Cardiac septum (tissue), 1 donor: ENCODE measurements at regions of chr15 and their contacts with region 1.

Region 1: DNA sequence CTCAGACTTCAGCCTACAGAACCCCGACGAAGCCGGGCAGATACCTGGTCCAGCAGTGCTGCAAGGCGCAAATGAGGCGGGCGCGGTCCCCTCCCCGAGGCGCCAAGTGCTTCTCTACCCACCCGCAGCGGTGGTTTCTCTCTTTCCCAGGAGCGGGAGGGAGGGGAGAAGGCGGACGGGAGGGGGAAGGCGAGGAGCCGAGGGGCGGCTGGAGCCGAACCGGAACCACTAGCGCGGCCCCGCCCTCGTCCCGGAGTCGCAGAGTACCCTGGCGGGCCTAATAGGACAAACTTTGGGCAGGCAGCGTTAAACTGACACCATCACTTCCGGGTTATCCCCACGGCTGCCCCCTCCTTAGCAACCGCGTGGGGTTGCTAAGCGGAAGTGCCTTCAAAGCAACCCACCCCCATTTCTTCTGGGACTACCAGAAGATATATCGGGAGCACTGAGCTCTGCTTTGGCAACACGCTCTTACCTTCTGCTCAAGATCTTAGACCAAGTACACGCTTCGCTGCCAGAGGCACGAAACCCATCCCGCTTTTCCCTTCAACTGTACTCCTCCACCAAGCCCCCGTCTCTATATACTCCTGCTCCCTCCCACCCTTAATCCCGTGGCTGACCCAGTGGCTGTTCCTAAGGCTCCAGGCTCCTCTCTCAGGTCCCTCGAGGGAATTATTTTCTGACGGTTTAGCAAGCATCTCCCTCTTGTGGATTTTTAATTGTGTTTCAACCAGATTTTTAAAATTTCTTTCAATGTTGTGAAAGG is at the start of gene CSNK1G1:
- DNase-seq: peak; percentile 96
- total RNA-seq, gene CSNK1G1: 8.3 TPM

Region 2: GRCh38 chr15:64209680-64210334 is 146.3 kb before region 1 on chr15:
- intact Hi-C with region 1: loop called (anchors 5 kb)
- DNase-seq: no peak

Region 3: DNA sequence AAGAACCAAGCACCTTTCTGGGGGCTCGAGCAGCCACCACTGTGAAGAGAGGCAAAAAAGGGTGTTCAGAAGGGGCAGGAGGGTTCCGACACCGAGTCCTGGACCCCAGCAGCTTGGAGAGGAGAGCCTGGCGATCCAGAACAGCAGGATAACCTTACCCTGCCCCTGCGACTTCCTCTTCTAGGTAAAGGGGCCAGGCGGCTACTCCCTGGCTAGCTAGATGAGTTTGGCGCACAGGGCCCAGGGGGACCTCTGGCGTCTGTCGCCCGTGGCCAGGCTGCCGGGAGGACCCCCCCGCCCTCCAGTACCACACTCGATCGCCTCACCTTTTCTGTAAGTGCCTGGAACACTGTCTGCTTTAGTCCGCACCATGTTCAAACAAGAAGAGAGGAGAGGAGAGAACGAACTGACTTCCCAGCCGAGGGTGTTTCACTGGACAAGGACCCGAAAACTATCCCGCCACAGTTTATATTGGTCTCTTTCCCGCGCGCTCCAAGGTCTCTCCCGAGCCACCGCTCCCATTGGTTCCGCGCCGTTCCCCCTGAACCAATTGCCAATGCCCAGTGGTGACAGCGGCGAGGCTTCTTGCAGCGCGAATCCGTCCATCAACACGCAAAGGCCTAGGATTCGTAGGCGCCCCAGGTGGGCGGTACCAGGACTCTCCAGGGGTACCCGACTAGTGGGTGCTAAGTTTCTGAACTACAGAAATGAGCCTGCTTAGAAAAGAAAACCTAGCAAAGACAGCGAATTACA is 25.0 kb after region 1 on chr15 and contains the start of gene PCLAF:
- intact Hi-C with region 1: no loop called
- DNase-seq: peak; percentile 96
- total RNA-seq, gene PCLAF: 0.19 TPM

Region 4: DNA sequence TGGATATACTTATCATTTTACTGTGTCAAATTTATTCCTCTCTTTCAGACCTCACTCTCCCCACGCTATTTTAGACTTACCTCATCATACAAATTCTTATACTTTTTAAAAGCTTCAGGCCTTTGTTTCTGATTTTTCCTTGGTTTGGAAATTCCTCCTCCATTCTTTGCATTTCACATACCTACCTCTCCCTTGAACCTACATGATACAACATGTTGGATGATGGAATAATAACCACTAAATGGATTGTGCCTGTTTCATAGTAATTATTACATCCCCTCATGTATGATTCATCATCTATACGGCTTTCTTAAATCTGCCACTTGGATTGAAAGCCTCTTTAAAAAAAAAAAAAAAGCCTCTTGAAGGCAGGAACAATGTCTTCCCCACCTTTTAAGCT is 56.1 kb after region 1 on chr15:
- intact Hi-C with region 1: no loop called
- DNase-seq: no peak

Region 5: DNA sequence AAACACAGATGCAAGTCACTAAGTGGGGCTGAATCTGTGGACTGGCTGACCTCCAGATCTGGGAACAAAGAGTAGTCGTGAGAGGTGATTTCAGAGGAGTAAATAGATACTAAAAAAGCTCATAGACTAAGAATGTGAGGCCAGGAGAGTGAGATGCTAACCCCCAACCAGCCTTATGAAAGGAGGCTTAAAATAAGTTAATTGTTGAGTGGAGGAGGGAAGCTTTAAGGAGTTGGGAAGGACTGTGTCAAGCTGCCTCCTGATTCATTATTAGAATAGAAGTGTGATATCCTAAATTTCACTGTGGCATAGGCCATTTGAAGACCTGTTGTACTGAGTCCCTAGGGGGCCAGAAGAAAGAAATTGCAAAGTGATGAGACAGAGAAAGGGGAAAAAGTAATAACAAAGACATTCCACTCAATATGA is 311.6 kb after region 1 on chr15:
- intact Hi-C with region 1: no loop called
- DNase-seq: no peak